ENCODE measurements at regions of chr2 and their contacts with region 1.

Region 1: DNA sequence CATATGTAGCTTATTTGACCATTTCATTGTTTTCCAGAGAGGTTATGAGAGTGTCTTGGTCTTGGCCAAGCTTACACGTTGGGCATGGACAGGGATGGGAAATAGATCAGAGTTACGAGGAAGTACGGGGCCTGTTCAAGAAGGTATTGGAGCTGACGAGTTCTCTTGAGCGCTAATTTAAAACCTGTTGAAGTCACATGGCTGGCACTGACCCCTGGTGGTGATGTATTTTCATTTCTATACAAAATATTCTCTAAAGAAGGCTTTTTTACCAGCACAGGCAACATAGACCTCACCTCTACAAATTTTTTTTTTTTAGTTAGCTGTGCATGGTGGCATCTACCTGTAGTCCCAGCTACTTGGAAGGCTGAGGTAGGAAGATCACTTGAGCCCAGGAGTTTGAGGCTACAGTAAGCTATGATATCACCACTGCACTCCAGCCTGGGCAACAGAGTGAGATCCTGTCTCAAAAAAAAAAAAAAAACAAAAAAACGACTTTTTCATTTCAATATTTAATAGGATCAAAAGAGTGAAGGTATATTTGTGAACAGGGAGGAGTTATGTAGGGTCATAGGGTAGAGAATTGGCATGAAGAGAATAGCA is 19.6 kb downstream of the UGP2 start:
- DNase-seq: no peak
- H3K4me3 ChIP-seq: no peak overlapping the region
- H3K27ac ChIP-seq: no peak overlapping the region
- H3K27me3 ChIP-seq: no peaks in the 10 kb centered on the region
- CTCF ChIP-seq: peak; percentile 56

Region 2: DNA sequence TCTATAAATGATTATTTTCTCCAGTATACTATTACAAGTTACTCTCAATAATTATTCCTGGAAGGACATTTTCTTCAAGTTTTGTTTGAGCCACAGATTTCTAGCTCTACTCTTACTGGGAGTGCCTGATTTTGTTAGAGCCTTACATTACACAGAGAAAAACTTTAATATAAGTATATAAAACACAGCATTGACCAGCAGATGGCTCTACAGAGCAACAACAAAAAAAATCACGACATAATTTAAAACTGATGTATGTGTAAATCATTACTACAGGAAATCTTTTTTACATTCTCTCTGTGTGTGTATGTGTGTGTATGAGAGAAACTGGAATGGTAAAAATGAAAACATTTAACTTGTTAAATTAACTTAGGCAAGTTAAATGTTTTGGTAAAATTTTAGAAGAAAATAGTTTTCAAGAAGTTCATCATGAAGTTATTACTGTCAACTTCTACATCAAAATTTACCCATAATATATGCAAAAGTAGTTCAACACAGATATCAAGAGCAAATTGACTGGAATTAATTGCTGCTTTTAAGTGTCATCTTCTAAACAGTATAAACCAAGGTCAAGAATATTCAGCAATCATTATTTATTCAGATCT is 169.2 kb before region 1 on chr2:
- CTCF ChIA-PET with region 1: interaction called, 103 read pairs
- POLR2A ChIA-PET with region 1: no interaction called
- DNase-seq: no peak
- H3K4me3 ChIP-seq: no peak overlapping the region
- H3K27ac ChIP-seq: no peak overlapping the region
- H3K27me3 ChIP-seq: no peaks in the 10 kb centered on the region
- CTCF ChIP-seq: peak; percentile 62

Region 3: DNA sequence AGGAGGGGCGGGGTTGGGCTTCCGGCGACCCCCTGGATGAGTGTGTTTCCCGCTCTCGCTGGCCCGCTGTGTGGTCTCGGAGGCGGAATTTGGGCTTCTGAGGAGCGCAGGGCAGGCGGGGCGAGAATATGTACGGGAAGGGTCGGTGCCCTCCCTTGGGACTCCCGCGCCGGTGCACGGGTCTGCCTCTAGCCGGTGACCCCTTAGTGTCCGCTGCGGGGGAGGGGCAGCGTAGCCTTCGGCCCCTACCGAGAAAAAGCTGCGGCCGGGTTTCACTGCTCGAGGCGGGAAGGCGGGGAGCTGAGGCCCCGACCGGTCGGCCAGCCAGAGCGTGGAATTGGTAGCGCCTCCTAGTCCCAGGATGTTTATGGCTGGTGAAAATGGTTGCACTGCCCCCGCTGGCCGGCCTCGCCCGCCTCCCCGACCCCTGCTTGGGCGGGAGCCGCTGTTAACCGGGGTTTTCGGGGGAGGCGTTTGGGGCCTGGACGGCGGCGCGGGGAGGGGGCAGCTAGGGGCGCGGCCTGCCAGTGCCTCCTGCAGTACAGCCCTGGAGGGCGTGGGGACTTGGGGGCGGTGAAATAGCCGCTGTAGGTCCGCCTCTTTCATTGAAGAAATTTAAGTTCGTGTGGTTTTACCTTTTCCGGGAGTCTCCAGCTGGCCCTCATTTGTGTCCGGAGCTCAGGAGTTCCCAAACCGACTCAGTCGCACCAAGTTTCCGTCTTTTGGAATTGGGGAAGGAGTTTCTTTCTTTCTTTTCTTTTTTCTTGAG is 19.9 kb before region 1 on chr2 and contains the start of gene UGP2:
- CTCF ChIA-PET with region 1: interaction called, 10 read pairs
- POLR2A ChIA-PET with region 1: interaction called, 15 read pairs
- DNase-seq: peak; percentile 83
- H3K4me3 ChIP-seq: peak within 1 kb of the TSS; percentile 64
- H3K27ac ChIP-seq: peak within 1 kb of the TSS; percentile 92
- H3K27me3 ChIP-seq: no peaks in the 10 kb centered on the region
- CTCF ChIP-seq: peak; percentile 30; the same call in 1 of the 2 replicates
- polyA plus RNA-seq, gene UGP2: 83.0 and 121 TPM in 2 replicates

Region 4: DNA sequence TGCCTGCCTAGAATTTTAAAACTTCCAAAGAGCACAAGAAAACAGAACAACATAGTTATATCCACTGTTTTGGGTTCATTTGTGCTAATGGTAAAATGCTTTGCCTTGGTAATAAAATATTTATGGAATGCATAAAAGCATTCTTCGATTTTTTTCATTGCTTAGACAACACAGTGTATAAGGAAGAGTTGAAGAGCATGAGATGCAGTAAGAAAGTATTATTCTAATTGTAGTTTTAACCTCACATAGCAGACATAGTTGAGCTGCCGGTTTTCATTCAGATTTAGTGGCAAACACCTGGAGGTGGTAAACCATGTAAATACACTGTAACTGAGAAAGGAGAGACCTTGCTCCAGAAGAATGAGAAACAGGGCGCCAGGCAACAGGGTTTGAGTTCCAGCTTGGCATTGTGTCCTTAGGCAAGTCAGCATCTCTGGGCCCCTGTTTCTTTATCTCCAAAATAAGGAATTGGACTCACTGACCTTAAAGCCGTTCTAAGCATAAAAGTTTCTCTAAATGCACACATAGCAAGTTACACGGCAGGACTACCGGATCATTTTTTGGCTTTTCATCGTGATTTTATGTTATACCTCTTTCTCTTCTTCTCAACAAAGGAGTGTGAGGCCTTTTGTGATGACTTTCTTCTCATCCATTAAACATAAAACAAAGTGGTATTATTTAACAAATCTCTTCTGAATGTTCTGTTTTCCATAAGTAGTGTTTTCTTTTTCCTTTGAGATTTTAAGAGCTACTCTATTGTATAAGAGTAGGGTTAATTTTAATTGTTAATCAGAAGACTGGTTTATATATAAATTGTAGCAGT is 11.7 kb before region 1 on chr2:
- CTCF ChIA-PET with region 1: interaction called, 37 read pairs
- POLR2A ChIA-PET with region 1: no interaction called
- DNase-seq: no peak
- H3K4me3 ChIP-seq: no peak overlapping the region
- H3K27ac ChIP-seq: no peak overlapping the region
- H3K27me3 ChIP-seq: no peaks in the 10 kb centered on the region
- CTCF ChIP-seq: no peak

Region 5: DNA sequence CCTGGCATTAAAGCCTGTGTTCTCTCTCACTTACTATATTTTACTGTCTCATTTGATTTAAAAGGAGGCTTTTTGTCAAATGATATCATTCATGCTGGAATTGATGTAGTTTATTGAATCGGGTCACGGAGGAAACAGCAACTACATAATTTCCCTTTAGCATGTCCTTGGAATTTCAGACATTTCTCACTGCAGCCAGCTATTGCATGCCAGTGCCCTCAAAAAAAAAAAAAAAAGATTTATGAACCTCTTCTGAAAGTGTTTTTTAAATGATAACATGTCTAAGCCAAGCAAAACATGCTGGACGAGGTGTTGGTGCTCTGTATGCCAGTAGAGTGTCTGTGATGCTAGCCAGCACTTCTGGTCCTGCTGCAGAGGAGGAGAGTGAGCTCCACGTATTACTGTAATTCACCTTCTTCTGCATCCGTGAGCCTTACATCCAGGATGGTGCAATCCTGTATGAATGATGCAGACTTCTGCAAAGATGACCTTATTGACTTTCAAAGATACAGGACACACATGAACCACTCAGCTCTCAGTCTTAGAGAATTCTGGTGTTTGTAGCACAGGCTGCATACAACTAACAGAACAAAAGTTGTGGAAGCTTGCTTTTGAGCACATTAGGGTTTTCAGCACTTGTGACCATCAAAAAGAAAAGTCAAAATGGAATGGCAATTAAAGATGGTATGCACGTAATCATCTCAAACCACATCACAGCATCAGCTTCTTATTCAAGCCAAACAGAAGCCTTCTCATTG is 11.4 kb after region 1 on chr2:
- CTCF ChIA-PET with region 1: interaction called, 10 read pairs
- POLR2A ChIA-PET with region 1: no interaction called
- DNase-seq: no peak
- H3K4me3 ChIP-seq: no peak overlapping the region
- H3K27ac ChIP-seq: no peak overlapping the region
- H3K27me3 ChIP-seq: no peaks in the 10 kb centered on the region
- CTCF ChIP-seq: no peak